Activated B cell treated with CpG ODN at 0.5 μM for 24 hours (primary cell): ENCODE measurements at regions of chrX and their contacts with region 1.

Region 1: DNA sequence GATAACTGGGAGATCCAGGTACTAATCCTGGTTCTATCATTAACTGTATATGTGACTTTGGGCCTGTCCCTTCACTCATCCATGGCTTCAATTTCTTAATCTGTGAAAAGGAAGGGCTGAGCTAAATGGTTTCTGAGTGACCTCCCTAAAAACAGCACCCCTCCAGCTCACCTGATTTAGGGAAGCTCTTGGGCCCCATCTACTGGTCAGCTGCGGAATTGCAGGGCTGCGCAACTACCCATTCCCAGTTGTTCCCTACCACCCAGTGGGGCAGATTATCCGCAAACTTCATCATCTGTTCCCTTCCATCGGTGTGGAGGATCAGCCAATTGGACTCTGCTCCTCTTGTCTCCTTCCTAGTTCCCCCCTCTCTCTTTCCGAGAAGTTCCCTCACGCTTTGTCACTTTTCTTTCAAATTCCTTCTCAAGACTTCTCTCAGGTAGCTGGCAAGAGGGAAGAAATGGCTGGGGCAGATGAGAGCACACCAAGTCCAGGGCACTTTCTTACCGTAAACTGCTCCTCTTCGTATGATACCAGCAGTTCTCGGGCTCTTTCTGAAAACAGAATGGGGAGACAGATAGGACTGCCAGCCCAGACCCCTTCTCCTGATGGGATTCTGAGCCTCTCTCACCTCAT is 5.8 kb downstream of the LAS1L start:
- DNase-seq: peak; percentile 29
- ATAC-seq: peak; percentile 65
- H3K4me3 Mint-ChIP-seq: no peak overlapping the region
- H3K27ac Mint-ChIP-seq: no peak overlapping the region
- H3K4me1 Mint-ChIP-seq: peaks cover 22% of the 10 kb centered on the region
- H3K27me3 Mint-ChIP-seq: no peaks in the 10 kb centered on the region
- CTCF ChIP-seq: peak; percentile 37

Region 2: GRCh38 chrX:64093761-64094160 is 1435.1 kb before region 1 on chrX:
- CTCF ChIA-PET with region 1: interaction called, 6 read pairs
- POLR2A ChIA-PET with region 1: no interaction called
- intact Hi-C with region 1: loop called (anchors 5 kb)
- DNase-seq: no peak
- ATAC-seq: no peak
- H3K4me3 Mint-ChIP-seq: no peak overlapping the region
- H3K27ac Mint-ChIP-seq: no peak overlapping the region
- H3K4me1 Mint-ChIP-seq: no peaks in the 10 kb centered on the region
- H3K27me3 Mint-ChIP-seq: no peaks in the 10 kb centered on the region
- CTCF ChIP-seq: no peak

Region 3: GRCh38 chrX:64642482-64642881 is 886.3 kb before region 1 on chrX:
- CTCF ChIA-PET with region 1: no interaction called
- POLR2A ChIA-PET with region 1: no interaction called
- intact Hi-C with region 1: loop called (anchors 5 kb)
- DNase-seq: no peak
- ATAC-seq: no peak
- H3K4me3 Mint-ChIP-seq: no peak overlapping the region
- H3K27ac Mint-ChIP-seq: no peak overlapping the region
- H3K4me1 Mint-ChIP-seq: no peaks in the 10 kb centered on the region
- H3K27me3 Mint-ChIP-seq: no peaks in the 10 kb centered on the region
- CTCF ChIP-seq: no peak

Region 4: DNA sequence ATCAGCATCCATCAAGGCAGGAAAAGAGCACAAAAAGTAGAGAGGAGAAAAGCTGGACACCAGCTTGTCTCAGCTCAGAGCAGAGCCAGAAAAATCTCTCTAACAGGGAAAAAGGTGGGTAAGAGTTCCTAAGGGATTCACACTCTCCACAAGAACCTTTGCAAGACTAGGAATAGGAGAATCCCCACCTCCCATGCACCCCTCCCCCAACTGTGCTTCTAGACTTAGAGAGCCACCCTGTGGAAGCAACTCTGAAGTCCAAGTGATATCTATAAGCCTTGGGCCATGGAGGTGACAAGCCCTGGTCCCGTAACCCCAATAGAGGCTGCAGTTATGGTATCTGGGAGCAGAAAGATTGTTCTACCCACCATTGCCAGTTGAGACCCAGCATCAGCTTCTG is 865.9 kb before region 1 on chrX:
- CTCF ChIA-PET with region 1: no interaction called
- POLR2A ChIA-PET with region 1: no interaction called
- intact Hi-C with region 1: no loop called
- DNase-seq: no peak
- ATAC-seq: no peak
- H3K4me3 Mint-ChIP-seq: no peak overlapping the region
- H3K27ac Mint-ChIP-seq: no peak overlapping the region
- H3K4me1 Mint-ChIP-seq: no peaks in the 10 kb centered on the region
- H3K27me3 Mint-ChIP-seq: no peaks in the 10 kb centered on the region
- CTCF ChIP-seq: no peak

Region 5: DNA sequence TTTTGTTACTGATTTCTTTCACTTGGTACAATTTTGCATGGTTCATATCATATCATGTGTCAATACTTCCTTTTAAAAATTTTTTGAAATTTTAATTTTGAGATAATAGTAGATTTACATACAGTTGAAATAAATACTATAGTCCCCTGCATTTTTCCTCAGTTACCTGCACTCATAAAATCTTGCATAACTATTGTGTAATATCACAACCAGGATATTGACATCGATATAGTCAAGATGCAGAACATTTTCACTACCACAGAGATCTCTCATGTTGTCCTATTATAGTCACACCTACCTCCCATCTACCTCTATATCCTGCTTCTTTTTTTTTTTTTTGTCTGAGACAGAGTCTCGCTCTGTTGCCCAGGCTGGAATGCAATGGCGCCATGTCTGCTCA is 101.9 kb after region 1 on chrX:
- CTCF ChIA-PET with region 1: no interaction called
- POLR2A ChIA-PET with region 1: no interaction called
- intact Hi-C with region 1: no loop called
- DNase-seq: no peak
- ATAC-seq: no peak
- H3K4me3 Mint-ChIP-seq: no peak overlapping the region
- H3K27ac Mint-ChIP-seq: no peak overlapping the region
- H3K4me1 Mint-ChIP-seq: no peaks in the 10 kb centered on the region
- H3K27me3 Mint-ChIP-seq: no peaks in the 10 kb centered on the region
- CTCF ChIP-seq: no peak